Common myeloid progenitor, CD34-positive (primary cell): ENCODE measurements at regions of chr16 and their contacts with region 1.

Region 1: GRCh38 chr16:11205754-11206581 is 50.0 kb downstream of the SOCS1 start:
- DNase-seq: peak in 1 of 3 donors; percentile 14
- H3K4me3 ChIP-seq: no peak overlapping the region
- H3K27ac ChIP-seq: no peak overlapping the region
- H3K4me1 ChIP-seq: peaks cover 2 to 74% (median 33%) of the 10 kb centered on the region in 4 experiments
- H3K27me3 ChIP-seq: no peaks in the 10 kb centered on the region

Region 2: GRCh38 chr16:10765772-10766171 is 440.2 kb before region 1 on chr16:
- CTCF ChIA-PET with region 1: no interaction called
- POLR2A ChIA-PET with region 1: no interaction called
- DNase-seq: peak in 2 of 3 donors; percentile 40 to 41
- H3K4me3 ChIP-seq: no peak overlapping the region
- H3K27ac ChIP-seq: no peak overlapping the region
- H3K4me1 ChIP-seq: peaks cover 0 to 15% (median 11%) of the 10 kb centered on the region in 4 experiments
- H3K27me3 ChIP-seq: no peaks in the 10 kb centered on the region

Region 3: GRCh38 chr16:11218604-11218962 is 12.6 kb after region 1 on chr16:
- CTCF ChIA-PET with region 1: interaction called, 11 read pairs
- POLR2A ChIA-PET with region 1: no interaction called
- DNase-seq: no peak
- H3K4me3 ChIP-seq: no peak overlapping the region
- H3K27ac ChIP-seq: no peak overlapping the region
- H3K4me1 ChIP-seq: peaks cover 0 to 18% (median 3%) of the 10 kb centered on the region in 4 experiments
- H3K27me3 ChIP-seq: no peaks in the 10 kb centered on the region